Pancreas (tissue), 10 donors: ENCODE measurements at regions of chr1 and their contacts with region 1.

Region 1: DNA sequence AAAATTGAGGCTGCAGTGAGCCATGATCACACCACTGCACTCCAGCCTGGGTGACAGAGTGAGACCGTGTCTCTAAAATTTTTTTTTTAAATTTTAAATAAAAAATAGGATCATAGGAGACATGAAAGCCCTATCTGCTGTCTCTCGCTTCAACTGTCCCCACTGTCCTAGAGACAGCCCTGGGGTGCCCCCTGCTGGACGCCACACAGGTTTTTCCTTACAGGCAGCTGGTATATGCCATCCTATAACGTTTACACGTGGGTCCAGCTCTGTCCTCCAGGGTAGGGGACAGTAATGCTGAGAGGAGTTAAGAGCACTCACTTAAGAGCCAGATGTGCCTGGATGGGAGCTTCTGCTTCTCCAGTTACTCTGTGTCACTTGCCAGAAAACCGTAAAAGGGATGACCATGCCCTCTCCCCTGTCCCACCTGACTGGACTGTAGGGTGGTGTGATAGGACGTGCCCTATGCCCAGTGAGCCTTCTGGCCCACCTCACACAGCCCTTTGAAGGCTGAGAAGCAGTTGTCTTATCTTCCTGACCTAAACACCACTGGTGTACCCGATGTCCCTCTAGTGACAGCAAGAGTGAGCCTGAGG is 8.5 kb downstream of the FBXO2 start:
- DNase-seq: peak; percentile 60 to 93 (median 78)
- ATAC-seq: peak in 2 of 4 donors; percentile 32 to 37
- H3K4me3 ChIP-seq: no peak overlapping the region
- H3K27ac ChIP-seq: no peak overlapping the region
- H3K4me1 ChIP-seq: peaks cover 5 to 17% (median 6%) of the 10 kb centered on the region in 3 donors
- H3K27me3 ChIP-seq: no peaks in the 10 kb centered on the region
- CTCF ChIP-seq: peak; percentile 54 to 72 (median 62)

Region 2: DNA sequence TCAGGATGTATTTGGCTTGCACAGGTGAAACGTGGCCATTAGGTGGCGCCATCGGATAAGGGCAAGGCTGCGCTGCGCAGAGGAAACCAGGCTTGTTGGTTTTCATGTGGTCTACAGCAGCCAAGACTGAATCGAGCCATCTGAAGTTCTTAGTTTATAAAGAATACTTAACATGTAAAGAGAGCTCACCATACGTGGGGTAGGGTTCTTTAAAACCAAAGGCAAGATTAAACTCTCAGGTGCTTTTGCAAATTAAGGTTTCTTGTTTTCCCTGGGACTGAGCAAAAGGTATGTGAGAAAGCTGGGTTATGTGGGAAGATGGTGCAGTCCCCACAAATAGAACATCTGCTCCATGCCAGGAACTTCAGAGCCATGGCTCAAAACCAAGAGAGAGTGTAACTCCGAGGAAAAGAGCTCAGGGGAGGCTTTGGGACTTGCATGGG is 608.0 kb before region 1 on chr1:
- intact Hi-C with region 1: loop called in 1 of 3 experiments (anchors 10 kb)
- DNase-seq: peak; percentile 76 to 96 (median 90)
- ATAC-seq: peak; percentile 93 to 100 (median 98)
- H3K4me3 ChIP-seq: no peak overlapping the region
- H3K27ac ChIP-seq: no peak overlapping the region
- H3K4me1 ChIP-seq: no peaks in the 10 kb centered on the region
- H3K27me3 ChIP-seq: no peaks in the 10 kb centered on the region
- CTCF ChIP-seq: peak; percentile 92 to 96 (median 94)

Region 3: GRCh38 chr1:11237356-11237755 is 408.4 kb before region 1 on chr1:
- intact Hi-C with region 1: loop called in 2 of 3 experiments (anchors 10 kb)
- DNase-seq: no peak
- ATAC-seq: no peak
- H3K4me3 ChIP-seq: no peak overlapping the region
- H3K27ac ChIP-seq: no peak overlapping the region
- H3K4me1 ChIP-seq: no peaks in the 10 kb centered on the region
- H3K27me3 ChIP-seq: no peaks in the 10 kb centered on the region
- CTCF ChIP-seq: no peak

Region 4: GRCh38 chr1:11248155-11248554 is 397.6 kb before region 1 on chr1:
- intact Hi-C with region 1: loop called in 1 of 3 experiments (anchors 10 kb)
- DNase-seq: no peak
- ATAC-seq: no peak
- H3K4me3 ChIP-seq: no peak overlapping the region
- H3K27ac ChIP-seq: no peak overlapping the region
- H3K4me1 ChIP-seq: no peaks in the 10 kb centered on the region
- H3K27me3 ChIP-seq: no peaks in the 10 kb centered on the region
- CTCF ChIP-seq: no peak

Region 5: GRCh38 chr1:11337580-11338073 is 308.1 kb before region 1 on chr1:
- intact Hi-C with region 1: loop called in 2 of 3 experiments (anchors 10 kb)
- DNase-seq: peak in 2 of 6 donors; percentile 33 to 76
- ATAC-seq: peak in 3 of 4 donors; percentile 33 to 72 (median 53)
- H3K4me3 ChIP-seq: no peak overlapping the region
- H3K27ac ChIP-seq: no peak overlapping the region
- H3K4me1 ChIP-seq: peaks cover 0 to 5% (median 0%) of the 10 kb centered on the region in 3 donors
- H3K27me3 ChIP-seq: no peaks in the 10 kb centered on the region
- CTCF ChIP-seq: peak; percentile 33 to 58 (median 45)

Region 6: GRCh38 chr1:11719313-11720032 is 73.7 kb after region 1 on chr1:
- intact Hi-C with region 1: loop called in 2 of 3 experiments (anchors 5 to 10 kb)
- DNase-seq: peak; percentile 60 to 92 (median 83)
- ATAC-seq: peak; percentile 78 to 96 (median 92)
- H3K4me3 ChIP-seq: peak overlapping the region in 3 of 4 donors; percentile 28 to 50 (median 38)
- H3K27ac ChIP-seq: peak overlapping the region in 2 of 4 donors; percentile 57 to 66
- H3K4me1 ChIP-seq: no peaks in the 10 kb centered on the region
- H3K27me3 ChIP-seq: no peaks in the 10 kb centered on the region
- CTCF ChIP-seq: peak; percentile 91 to 97 (median 94)